Endothelial cell of umbilical vein (primary cell): ENCODE measurements at regions of chr19 and their contacts with region 1.

Region 1: GRCh38 chr19:32345261-32346207 is at the start of gene ZNF507:
- DNase-seq: peak; percentile 78
- H3K4me3 ChIP-seq: peak within 1 kb of the TSS; percentile 88 to 93 (median 92)
- H3K27ac ChIP-seq: peak within 1 kb of the TSS; percentile 73
- H3K4me1 ChIP-seq: peaks cover 13% of the 10 kb centered on the region
- H3K27me3 ChIP-seq: peaks cover 0 to 2% of the 10 kb centered on the region in 2 experiments
- CTCF ChIP-seq: no peak
- POLR2A ChIP-seq: peak; percentile 54
- total RNA-seq, gene ZNF507: 20.3 and 23.0 TPM in 2 replicates

Region 2: GRCh38 chr19:32253683-32254508 is 91.6 kb before region 1 on chr19:
- CTCF ChIA-PET with region 1: no interaction called
- POLR2A ChIA-PET with region 1: no interaction called
- dilution Hi-C with region 1: no loop called
- intact Hi-C with region 1: no loop called
- DNase-seq: no peak
- H3K4me3 ChIP-seq: no peak overlapping the region
- H3K27ac ChIP-seq: no peak overlapping the region
- H3K4me1 ChIP-seq: no peaks in the 10 kb centered on the region
- H3K27me3 ChIP-seq: no peaks in the 10 kb centered on the region
- CTCF ChIP-seq: no peak
- POLR2A ChIP-seq: no peak

Region 3: DNA sequence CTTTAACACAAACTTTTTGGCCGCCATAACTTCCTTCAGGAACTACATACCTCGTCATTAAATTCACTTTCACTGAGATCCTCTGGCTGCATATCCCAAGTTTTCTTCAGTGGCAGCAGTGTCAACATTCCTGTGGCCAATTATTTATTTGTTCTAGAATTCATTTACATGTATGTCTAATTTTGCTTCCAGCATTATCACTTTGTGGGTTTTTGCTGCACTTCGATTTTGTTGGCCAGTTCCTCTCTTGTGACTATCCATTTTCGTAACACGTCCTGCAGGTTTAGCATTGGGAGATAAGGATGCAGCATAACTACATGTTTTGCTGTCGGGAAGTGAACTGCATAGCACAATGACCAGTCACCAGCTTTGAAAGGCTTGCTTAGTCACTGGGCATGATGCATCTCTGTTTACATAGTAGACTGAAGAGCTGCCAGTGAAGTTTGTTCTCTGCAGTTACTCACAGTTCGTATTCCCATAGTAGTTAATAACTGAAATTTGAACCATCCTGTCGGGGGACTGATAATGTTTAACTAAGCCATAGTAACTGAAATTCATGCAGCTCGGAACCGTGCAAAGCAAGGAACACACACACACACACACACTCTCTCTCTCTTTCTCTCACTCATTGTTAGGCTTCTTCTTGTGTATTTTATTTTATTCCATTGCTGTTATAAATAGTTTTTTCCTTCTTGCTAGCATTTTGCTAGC is 28.2 kb after region 1 on chr19:
- CTCF ChIA-PET with region 1: interaction called, 4 read pairs
- POLR2A ChIA-PET with region 1: no interaction called
- dilution Hi-C with region 1: no loop called
- intact Hi-C with region 1: loop called (anchors 1 kb)
- DNase-seq: peak; percentile 96
- H3K4me3 ChIP-seq: peak overlapping the region in 1 of 3 experiments; percentile 36
- H3K27ac ChIP-seq: peak overlapping the region; percentile 89
- H3K4me1 ChIP-seq: peaks cover 22% of the 10 kb centered on the region
- H3K27me3 ChIP-seq: no peaks in the 10 kb centered on the region
- CTCF ChIP-seq: no peak
- POLR2A ChIP-seq: no peak

Region 4: DNA sequence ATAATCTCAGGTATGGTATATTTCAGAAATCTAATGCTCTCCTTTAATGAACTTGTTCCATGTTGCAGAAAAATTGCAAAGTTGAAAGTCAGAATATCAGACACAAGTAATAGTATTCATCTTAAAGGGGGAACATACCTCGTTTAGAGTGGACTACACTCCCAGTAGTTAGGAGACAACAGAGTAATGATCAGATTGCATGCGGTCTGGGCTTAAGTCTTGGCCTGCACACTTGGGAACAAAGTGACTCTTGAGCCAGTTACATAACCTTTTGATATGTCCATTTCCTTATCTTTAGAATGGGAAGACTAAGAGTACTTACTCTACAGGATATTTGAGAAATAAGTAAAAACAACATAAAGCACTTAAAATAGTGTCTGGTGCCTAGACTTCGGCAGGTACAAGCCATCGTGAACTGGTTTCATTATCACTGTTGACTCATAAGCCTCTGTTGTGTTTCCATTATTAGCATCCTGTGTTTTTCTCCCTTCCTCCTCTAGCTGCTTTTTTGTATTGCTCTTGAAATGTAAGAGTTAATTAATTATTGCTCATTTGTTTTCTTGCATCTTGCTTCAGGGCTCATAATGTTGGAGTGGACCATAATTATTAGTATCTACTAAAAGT is 113.1 kb after region 1 on chr19:
- CTCF ChIA-PET with region 1: no interaction called
- POLR2A ChIA-PET with region 1: no interaction called
- dilution Hi-C with region 1: no loop called
- intact Hi-C with region 1: loop called (anchors 5 kb)
- DNase-seq: peak; percentile 30
- H3K4me3 ChIP-seq: no peak overlapping the region
- H3K27ac ChIP-seq: peak overlapping the region; percentile 40
- H3K4me1 ChIP-seq: peaks cover 5% of the 10 kb centered on the region
- H3K27me3 ChIP-seq: no peaks in the 10 kb centered on the region
- CTCF ChIP-seq: no peak
- POLR2A ChIP-seq: no peak

Region 5: DNA sequence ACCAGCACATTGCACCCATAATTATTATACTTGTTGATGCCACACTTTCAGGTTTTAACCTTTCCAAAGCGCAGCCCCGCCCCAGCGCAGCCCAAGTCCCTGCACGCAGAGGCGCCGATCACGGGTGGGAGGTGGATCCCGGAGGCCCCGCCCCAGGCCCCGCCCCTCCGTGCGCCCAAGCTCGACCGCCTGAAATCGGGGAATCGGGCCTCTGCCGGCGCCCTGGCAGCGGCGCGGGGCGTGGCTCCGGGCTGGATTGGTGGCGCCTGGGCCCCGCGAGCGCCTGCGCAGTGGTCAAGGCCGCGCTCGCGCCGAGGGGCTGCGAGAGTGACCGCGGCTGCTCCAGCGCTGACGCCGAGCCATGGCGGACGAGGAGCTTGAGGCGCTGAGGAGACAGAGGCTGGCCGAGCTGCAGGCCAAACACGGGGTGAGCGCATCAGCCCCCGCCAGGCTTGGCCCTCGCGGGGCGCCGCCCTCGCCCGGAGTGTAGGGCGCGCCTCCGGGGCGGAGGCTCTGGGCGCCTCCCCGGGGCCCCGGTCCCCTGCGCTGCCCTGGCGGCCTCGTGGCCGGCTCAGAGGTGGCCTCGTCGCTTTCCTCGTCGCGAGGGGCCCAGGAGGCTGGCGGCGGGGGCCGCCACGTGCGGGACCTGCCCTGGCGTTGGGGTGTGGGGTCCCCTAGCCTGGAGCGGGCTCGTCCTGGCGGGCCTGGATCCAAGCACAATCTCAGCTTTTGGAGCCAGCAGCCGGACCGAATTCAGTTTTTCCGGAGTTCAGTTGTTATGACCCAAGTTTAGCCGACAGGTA is 235.6 kb after region 1 on chr19 and contains the start of gene PDCD5:
- CTCF ChIA-PET with region 1: interaction called, 3 read pairs
- POLR2A ChIA-PET with region 1: no interaction called
- dilution Hi-C with region 1: no loop called
- intact Hi-C with region 1: loop called (anchors 1 kb)
- DNase-seq: peak; percentile 94
- H3K4me3 ChIP-seq: peak within 1 kb of the TSS; percentile 57 to 83 (median 74)
- H3K27ac ChIP-seq: peak within 1 kb of the TSS; percentile 48
- H3K4me1 ChIP-seq: peaks cover 11% of the 10 kb centered on the region
- H3K27me3 ChIP-seq: peaks cover 0 to 2% of the 10 kb centered on the region in 2 experiments
- CTCF ChIP-seq: no peak
- POLR2A ChIP-seq: peak; percentile 85
- total RNA-seq, gene PDCD5: 154 and 168 TPM in 2 replicates